CD4-positive, alpha-beta memory T cell (primary cell): ENCODE measurements at regions of chr6 and their contacts with region 1.

Region 1: GRCh38 chr6:132300323-132300949 is 100.8 kb downstream of the MOXD1 start:
- DNase-seq: peak in 1 of 5 donors; percentile 5
- H3K4me3 ChIP-seq: no peak overlapping the region
- H3K4me3 Mint-ChIP-seq: no peak overlapping the region
- H3K27ac ChIP-seq: no peak overlapping the region
- H3K27ac Mint-ChIP-seq: no peak overlapping the region
- H3K4me1 ChIP-seq: no peaks in the 10 kb centered on the region
- H3K4me1 Mint-ChIP-seq: no peaks in the 10 kb centered on the region
- H3K27me3 ChIP-seq: no peaks in the 10 kb centered on the region
- H3K27me3 Mint-ChIP-seq: peaks cover 17 to 19% of the 10 kb centered on the region in 2 donors

Region 2: DNA sequence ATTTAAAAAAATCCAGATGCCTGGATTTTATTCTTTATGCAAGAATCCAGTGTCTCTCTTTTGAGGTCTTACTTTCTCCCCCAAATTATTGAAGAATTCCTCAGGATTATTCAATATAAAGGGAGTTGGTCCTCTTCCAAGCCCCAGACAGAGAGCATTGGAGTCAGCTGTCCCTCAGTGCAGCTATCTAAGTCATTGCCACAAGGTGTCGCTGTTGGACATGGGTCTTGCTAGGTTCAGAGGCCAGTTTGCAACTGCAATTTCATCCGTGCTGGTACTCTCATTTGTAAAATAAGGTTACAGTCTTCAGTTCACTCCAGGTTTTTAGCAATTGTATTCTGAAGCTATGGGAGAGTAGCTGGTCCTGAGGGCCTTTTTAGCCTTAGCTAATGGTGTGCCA is 377.1 kb before region 1 on chr6:
- CTCF ChIA-PET with region 1: no interaction called
- POLR2A ChIA-PET with region 1: no interaction called
- intact Hi-C with region 1: no loop called
- DNase-seq: peak in 3 of 5 donors; percentile 14 to 23 (median 17)
- H3K4me3 ChIP-seq: no peak overlapping the region
- H3K4me3 Mint-ChIP-seq: no peak overlapping the region
- H3K27ac ChIP-seq: no peak overlapping the region
- H3K27ac Mint-ChIP-seq: no peak overlapping the region
- H3K4me1 ChIP-seq: no peaks in the 10 kb centered on the region
- H3K4me1 Mint-ChIP-seq: no peaks in the 10 kb centered on the region
- H3K27me3 ChIP-seq: no peaks in the 10 kb centered on the region
- H3K27me3 Mint-ChIP-seq: peaks cover 7 to 18% of the 10 kb centered on the region in 2 donors

Region 3: GRCh38 chr6:132007474-132008190 is 292.8 kb before region 1 on chr6:
- CTCF ChIA-PET with region 1: no interaction called
- POLR2A ChIA-PET with region 1: no interaction called
- intact Hi-C with region 1: no loop called
- DNase-seq: no peak
- H3K4me3 ChIP-seq: no peak overlapping the region
- H3K4me3 Mint-ChIP-seq: no peak overlapping the region
- H3K27ac ChIP-seq: no peak overlapping the region
- H3K27ac Mint-ChIP-seq: no peak overlapping the region
- H3K4me1 ChIP-seq: no peaks in the 10 kb centered on the region
- H3K4me1 Mint-ChIP-seq: no peaks in the 10 kb centered on the region
- H3K27me3 ChIP-seq: no peaks in the 10 kb centered on the region
- H3K27me3 Mint-ChIP-seq: no peaks in the 10 kb centered on the region

Region 4: GRCh38 chr6:132287101-132287500 is 13.3 kb before region 1 on chr6:
- CTCF ChIA-PET with region 1: interaction called, 12 read pairs
- POLR2A ChIA-PET with region 1: no interaction called
- intact Hi-C with region 1: no loop called
- DNase-seq: no peak
- H3K4me3 ChIP-seq: no peak overlapping the region
- H3K4me3 Mint-ChIP-seq: no peak overlapping the region
- H3K27ac ChIP-seq: no peak overlapping the region
- H3K27ac Mint-ChIP-seq: peak overlapping the region in 1 of 7 donors; percentile 5
- H3K4me1 ChIP-seq: no peaks in the 10 kb centered on the region
- H3K4me1 Mint-ChIP-seq: peaks cover 0 to 4% (median under 1%) of the 10 kb centered on the region in 4 donors
- H3K27me3 ChIP-seq: no peaks in the 10 kb centered on the region
- H3K27me3 Mint-ChIP-seq: peaks cover 6 to 10% of the 10 kb centered on the region in 2 donors